ENCODE measurements at regions of chr2 and their contacts with region 1.

Region 1: GRCh38 chr2:200901459-200902072 is 12.4 kb downstream of the NIF3L1 start:
- DNase-seq: peak; percentile 83
- ATAC-seq: peak; percentile 100
- H3K4me3 Mint-ChIP-seq: no peak overlapping the region
- H3K27ac Mint-ChIP-seq: peak overlapping the region; percentile 73
- H3K4me1 Mint-ChIP-seq: peaks cover 2% of the 10 kb centered on the region
- H3K27me3 Mint-ChIP-seq: no peaks in the 10 kb centered on the region

Region 2: GRCh38 chr2:200498402-200499162 is 403.0 kb before region 1 on chr2:
- CTCF ChIA-PET with region 1: no interaction called
- POLR2A ChIA-PET with region 1: no interaction called
- intact Hi-C with region 1: no loop called
- DNase-seq: no peak
- ATAC-seq: no peak
- H3K4me3 Mint-ChIP-seq: no peak overlapping the region
- H3K27ac Mint-ChIP-seq: no peak overlapping the region
- H3K4me1 Mint-ChIP-seq: peaks cover 2% of the 10 kb centered on the region
- H3K27me3 Mint-ChIP-seq: no peaks in the 10 kb centered on the region

Region 3: GRCh38 chr2:201158111-201158929 is 256.8 kb after region 1 on chr2:
- CTCF ChIA-PET with region 1: interaction called, 6 read pairs
- POLR2A ChIA-PET with region 1: no interaction called
- intact Hi-C with region 1: loop called (anchors 1 to 5 kb)
- DNase-seq: peak; percentile 59
- ATAC-seq: peak; percentile 66
- H3K4me3 Mint-ChIP-seq: no peak overlapping the region
- H3K27ac Mint-ChIP-seq: peak overlapping the region; percentile 64
- H3K4me1 Mint-ChIP-seq: peaks cover 23% of the 10 kb centered on the region
- H3K27me3 Mint-ChIP-seq: no peaks in the 10 kb centered on the region

Region 4: GRCh38 chr2:201176081-201176481 is 274.5 kb after region 1 on chr2:
- CTCF ChIA-PET with region 1: interaction called, 32 read pairs
- POLR2A ChIA-PET with region 1: interaction called, 3 read pairs
- intact Hi-C with region 1: loop called (anchors 1 kb)
- DNase-seq: no peak
- ATAC-seq: no peak
- H3K4me3 Mint-ChIP-seq: no peak overlapping the region
- H3K27ac Mint-ChIP-seq: no peak overlapping the region
- H3K4me1 Mint-ChIP-seq: peaks cover 10% of the 10 kb centered on the region
- H3K27me3 Mint-ChIP-seq: no peaks in the 10 kb centered on the region

Region 5: DNA sequence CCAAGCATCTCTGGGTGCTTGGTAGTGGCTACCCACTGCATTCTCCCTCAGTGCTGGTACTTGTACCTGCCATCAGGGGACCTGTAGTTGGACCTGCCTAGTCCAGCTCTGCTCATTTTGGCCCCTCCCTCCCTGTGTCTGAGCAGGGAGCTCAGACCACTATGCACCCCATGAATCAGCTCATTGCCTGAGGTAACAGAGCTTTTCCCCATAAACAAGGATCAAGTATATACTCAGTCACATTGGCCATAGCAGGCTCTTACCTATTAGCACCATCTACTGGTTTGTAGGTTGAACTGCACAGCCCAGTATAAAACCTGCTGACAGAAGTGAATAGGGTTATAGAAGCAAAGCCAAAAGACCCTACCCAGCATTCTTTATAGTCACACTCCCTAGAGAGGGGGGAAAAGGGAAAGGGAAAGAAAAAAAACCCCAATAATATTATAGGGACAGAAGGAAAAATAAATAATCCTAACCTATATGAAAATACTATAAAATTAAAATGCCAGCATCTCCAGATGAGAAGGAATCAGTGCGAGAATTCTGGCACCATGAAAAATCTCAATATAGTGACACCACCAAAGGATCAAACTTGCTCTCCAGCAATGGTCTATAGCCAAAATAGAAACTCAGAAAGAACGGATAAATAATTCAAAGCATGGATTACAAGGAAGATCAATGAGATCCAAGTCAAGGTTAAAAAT is 462.4 kb after region 1 on chr2:
- CTCF ChIA-PET with region 1: no interaction called
- POLR2A ChIA-PET with region 1: no interaction called
- intact Hi-C with region 1: loop called in 1 of 2 experiments (anchors 5 kb)
- DNase-seq: peak; percentile 27
- ATAC-seq: peak; percentile 91
- H3K4me3 Mint-ChIP-seq: no peak overlapping the region
- H3K27ac Mint-ChIP-seq: peak overlapping the region; percentile 44
- H3K4me1 Mint-ChIP-seq: peaks cover 34% of the 10 kb centered on the region
- H3K27me3 Mint-ChIP-seq: no peaks in the 10 kb centered on the region